Calu3 (cell line): ENCODE measurements at regions of chr3 and their contacts with region 1.

Region 1: GRCh38 chr3:49199239-49199899 is 28.0 kb downstream of the KLHDC8B start:
- DNase-seq: no peak
- H3K4me3 Mint-ChIP-seq: no peak overlapping the region
- H3K27ac Mint-ChIP-seq: no peak overlapping the region
- H3K4me1 Mint-ChIP-seq: no peaks in the 10 kb centered on the region
- H3K27me3 Mint-ChIP-seq: no peaks in the 10 kb centered on the region
- CTCF ChIP-seq: no peak

Region 2: GRCh38 chr3:49081429-49081828 is 117.9 kb before region 1 on chr3:
- CTCF ChIA-PET with region 1: interaction called, 11 read pairs
- intact Hi-C with region 1: no loop called
- DNase-seq: no peak
- H3K4me3 Mint-ChIP-seq: no peak overlapping the region
- H3K27ac Mint-ChIP-seq: no peak overlapping the region
- H3K4me1 Mint-ChIP-seq: no peaks in the 10 kb centered on the region
- H3K27me3 Mint-ChIP-seq: no peaks in the 10 kb centered on the region
- CTCF ChIP-seq: no peak